AG04449 (cell line): ENCODE measurements at regions of chr5 and their contacts with region 1.

Region 1: DNA sequence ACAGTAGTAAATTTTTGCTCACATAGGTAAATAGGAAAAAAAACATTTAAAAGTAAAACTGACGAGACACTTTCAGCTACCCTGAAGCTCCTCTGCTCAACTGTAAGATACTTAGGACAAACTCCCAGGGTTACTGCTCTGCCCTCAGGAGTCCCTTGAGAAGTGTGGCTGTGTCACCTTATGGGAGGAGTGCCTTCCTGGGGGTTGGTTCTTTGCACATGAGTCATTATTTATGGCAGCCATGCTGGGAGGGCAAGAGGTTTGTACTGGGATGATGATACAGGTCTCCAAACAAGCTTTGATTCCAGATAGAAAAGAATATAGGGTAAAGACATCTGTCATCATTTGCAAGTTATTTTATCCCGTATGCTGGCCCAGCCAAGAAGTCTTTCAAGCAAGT is 45.9 kb downstream of the TTC1 start:
- DNase-seq: no peak
- H3K4me3 ChIP-seq: no peak overlapping the region
- CTCF ChIP-seq: no peak

Region 2: GRCh38 chr5:159732220-159732619 is 322.6 kb before region 1 on chr5:
- CTCF ChIA-PET with region 1: no interaction called
- POLR2A ChIA-PET with region 1: no interaction called
- DNase-seq: no peak
- H3K4me3 ChIP-seq: no peak overlapping the region
- CTCF ChIP-seq: no peak

Region 3: GRCh38 chr5:159915904-159916840 is 138.7 kb before region 1 on chr5 and contains the start of gene ADRA1B:
- CTCF ChIA-PET with region 1: no interaction called
- POLR2A ChIA-PET with region 1: no interaction called
- DNase-seq: no peak
- H3K4me3 ChIP-seq: peak within 1 kb of the TSS; percentile 54
- CTCF ChIP-seq: peak; percentile 89

Region 4: GRCh38 chr5:160071516-160071915 is 16.7 kb after region 1 on chr5:
- CTCF ChIA-PET with region 1: interaction called, 11 read pairs
- POLR2A ChIA-PET with region 1: no interaction called
- DNase-seq: no peak
- H3K4me3 ChIP-seq: no peak overlapping the region
- CTCF ChIP-seq: no peak

Region 5: DNA sequence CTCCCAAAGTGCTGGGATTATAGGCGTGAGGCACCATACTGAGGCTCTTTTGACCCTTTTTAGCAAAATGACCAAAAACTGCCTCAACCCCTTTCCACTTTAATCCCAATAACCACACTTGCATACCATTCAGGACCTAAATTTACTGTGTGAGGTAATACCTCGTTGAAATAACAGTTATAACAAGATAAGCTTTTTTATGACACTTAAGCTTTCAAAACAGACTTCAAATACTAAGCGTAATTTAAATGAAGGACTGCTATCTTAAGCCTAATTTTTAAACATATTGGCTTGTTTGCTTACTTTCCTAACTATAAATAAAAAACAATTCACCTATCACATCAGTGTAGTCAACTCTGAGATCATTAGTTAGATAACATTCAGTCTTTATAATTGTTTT is 26.7 kb after region 1 on chr5:
- CTCF ChIA-PET with region 1: interaction called, 12 read pairs
- POLR2A ChIA-PET with region 1: no interaction called
- DNase-seq: no peak
- H3K4me3 ChIP-seq: no peak overlapping the region
- CTCF ChIP-seq: no peak

Region 6: GRCh38 chr5:160805376-160805775 is 750.5 kb after region 1 on chr5:
- CTCF ChIA-PET with region 1: no interaction called
- POLR2A ChIA-PET with region 1: no interaction called
- DNase-seq: no peak
- H3K4me3 ChIP-seq: no peak overlapping the region
- CTCF ChIP-seq: no peak